CD4-positive, alpha-beta memory T cell (primary cell): ENCODE measurements at regions of chr16 and their contacts with region 1.

Region 1: DNA sequence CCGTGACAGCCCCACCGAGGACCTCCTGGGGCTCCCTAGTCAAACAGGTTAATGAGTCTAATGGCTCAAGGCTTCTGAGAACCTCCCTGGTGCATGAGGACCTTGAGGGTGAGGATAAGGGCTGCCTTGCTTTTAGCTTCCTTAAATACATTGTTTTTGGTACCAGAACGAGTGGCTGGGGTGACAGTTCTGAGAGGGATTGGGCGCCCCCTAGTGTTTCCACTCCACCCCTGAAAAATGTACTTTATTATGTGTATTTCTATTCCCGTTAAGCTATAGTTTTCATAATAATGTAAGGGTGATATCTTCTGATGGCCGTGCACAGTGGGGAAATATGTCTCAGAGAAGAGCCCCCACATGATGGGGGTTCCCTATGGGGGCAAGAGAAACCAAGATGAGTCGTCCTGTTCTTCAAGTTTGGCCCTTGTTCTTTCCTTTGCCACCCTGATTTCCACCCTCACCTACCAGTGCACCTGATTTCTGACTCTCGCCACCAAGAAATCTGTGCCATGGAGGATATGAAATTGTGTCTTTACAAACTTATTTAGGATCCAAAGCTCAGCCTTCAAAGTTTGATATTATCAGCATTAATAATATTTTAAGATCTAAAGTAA is 14.5 kb upstream of the VWA3A start:
- DNase-seq: peak; percentile 61 to 69 (median 67)
- H3K4me3 ChIP-seq: no peak overlapping the region
- H3K4me3 Mint-ChIP-seq: no peak overlapping the region
- H3K27ac ChIP-seq: no peak overlapping the region
- H3K27ac Mint-ChIP-seq: no peak overlapping the region
- H3K4me1 ChIP-seq: no peaks in the 10 kb centered on the region
- H3K4me1 Mint-ChIP-seq: peaks cover 0 to 5% (median 1%) of the 10 kb centered on the region in 4 donors
- H3K27me3 ChIP-seq: no peaks in the 10 kb centered on the region
- H3K27me3 Mint-ChIP-seq: no peaks in the 10 kb centered on the region

Region 2: GRCh38 chr16:21937336-21937829 is 140.4 kb before region 1 on chr16:
- CTCF ChIA-PET with region 1: no interaction called
- POLR2A ChIA-PET with region 1: no interaction called
- intact Hi-C with region 1: no loop called
- DNase-seq: no peak
- H3K4me3 ChIP-seq: no peak overlapping the region
- H3K4me3 Mint-ChIP-seq: no peak overlapping the region
- H3K27ac ChIP-seq: no peak overlapping the region
- H3K27ac Mint-ChIP-seq: peak overlapping the region in 2 of 7 donors; percentile 30 to 80
- H3K4me1 ChIP-seq: peaks cover 6% of the 10 kb centered on the region
- H3K4me1 Mint-ChIP-seq: peaks cover 9 to 15% (median 11%) of the 10 kb centered on the region in 4 donors
- H3K27me3 ChIP-seq: no peaks in the 10 kb centered on the region
- H3K27me3 Mint-ChIP-seq: peaks cover 0 to 2% of the 10 kb centered on the region in 2 donors

Region 3: DNA sequence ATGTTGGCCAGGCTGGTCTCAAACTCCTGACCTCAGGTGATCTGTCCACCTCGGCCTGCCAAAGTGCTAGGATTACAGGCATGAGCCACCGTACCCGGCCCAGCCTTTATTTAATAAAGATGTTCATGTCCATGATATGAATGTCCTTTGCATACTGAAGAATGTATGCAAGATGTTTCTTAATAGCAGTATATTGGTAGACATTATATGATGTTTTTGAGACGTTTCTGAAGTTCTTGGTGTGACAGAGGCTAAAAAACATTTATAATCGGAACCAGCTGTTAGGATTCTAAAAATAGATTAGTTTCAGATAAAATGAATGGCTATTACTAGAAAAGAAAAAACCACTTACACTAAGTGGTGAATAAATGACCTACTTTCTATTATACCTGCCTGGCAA is 88.7 kb before region 1 on chr16:
- CTCF ChIA-PET with region 1: interaction called, 25 read pairs
- POLR2A ChIA-PET with region 1: no interaction called
- intact Hi-C with region 1: no loop called
- DNase-seq: no peak
- H3K4me3 ChIP-seq: no peak overlapping the region
- H3K4me3 Mint-ChIP-seq: no peak overlapping the region
- H3K27ac ChIP-seq: no peak overlapping the region
- H3K27ac Mint-ChIP-seq: peak overlapping the region in 1 of 7 donors; percentile 62
- H3K4me1 ChIP-seq: peaks cover 24% of the 10 kb centered on the region
- H3K4me1 Mint-ChIP-seq: peaks cover 19 to 39% (median 27%) of the 10 kb centered on the region in 4 donors
- H3K27me3 ChIP-seq: no peaks in the 10 kb centered on the region
- H3K27me3 Mint-ChIP-seq: no peaks in the 10 kb centered on the region

Region 4: DNA sequence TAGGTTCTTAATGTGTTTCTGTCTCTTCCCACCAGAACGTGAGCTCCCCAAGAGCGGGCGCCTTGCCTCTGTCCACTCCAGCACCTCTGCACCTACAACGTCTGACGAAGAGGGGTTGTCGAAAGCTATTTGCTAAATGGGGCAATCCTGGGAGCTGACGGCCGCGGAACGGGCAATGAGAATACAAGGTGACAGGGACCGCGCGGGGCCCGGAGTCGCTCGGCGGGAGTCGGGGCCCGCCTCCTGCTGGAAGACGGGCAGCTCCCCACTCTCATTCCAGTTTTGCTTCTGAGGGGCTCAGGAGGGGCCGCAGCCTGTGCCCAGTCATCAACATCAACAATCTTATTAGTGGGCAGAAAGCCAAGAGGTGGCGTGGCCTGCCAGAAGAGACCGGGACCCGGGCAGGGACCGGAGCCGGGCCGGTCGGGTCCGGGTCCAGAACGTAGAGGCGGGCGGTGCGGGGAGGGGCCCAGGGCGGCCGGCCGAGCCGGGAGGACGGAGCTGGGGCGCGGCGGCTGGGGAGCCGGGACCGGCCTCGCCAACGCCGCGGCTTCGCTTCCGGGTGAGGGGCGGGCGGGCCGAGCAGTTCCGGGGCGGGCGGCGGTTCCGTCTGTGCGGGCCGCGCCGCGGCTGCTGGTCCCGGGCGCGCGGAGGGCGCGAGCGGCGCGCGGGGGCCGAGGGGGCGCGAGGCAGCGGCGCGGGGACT is 70.1 kb before region 1 on chr16 and contains the start of gene MOSMO:
- CTCF ChIA-PET with region 1: interaction called, 181 read pairs
- POLR2A ChIA-PET with region 1: interaction called, 14 read pairs
- intact Hi-C with region 1: no loop called
- DNase-seq: peak; percentile 65 to 73 (median 66)
- H3K4me3 ChIP-seq: peak within 1 kb of the TSS; percentile 12 to 74
- H3K4me3 Mint-ChIP-seq: peak within 1 kb of the TSS; percentile 86 to 93 (median 90)
- H3K27ac ChIP-seq: peak within 1 kb of the TSS; percentile 78
- H3K27ac Mint-ChIP-seq: peak within 1 kb of the TSS; percentile 61 to 97 (median 87)
- H3K4me1 ChIP-seq: peaks cover 41% of the 10 kb centered on the region
- H3K4me1 Mint-ChIP-seq: peaks cover 32 to 54% (median 40%) of the 10 kb centered on the region in 4 donors
- H3K27me3 ChIP-seq: no peaks in the 10 kb centered on the region
- H3K27me3 Mint-ChIP-seq: no peaks in the 10 kb centered on the region
- total RNA-seq, gene MOSMO: 21.9 to 23.4 TPM

Region 5: GRCh38 chr16:22065252-22065651 is 12.6 kb before region 1 on chr16:
- CTCF ChIA-PET with region 1: interaction called, 29 read pairs
- POLR2A ChIA-PET with region 1: no interaction called
- intact Hi-C with region 1: no loop called
- DNase-seq: no peak
- H3K4me3 ChIP-seq: no peak overlapping the region
- H3K4me3 Mint-ChIP-seq: no peak overlapping the region
- H3K27ac ChIP-seq: no peak overlapping the region
- H3K27ac Mint-ChIP-seq: no peak overlapping the region
- H3K4me1 ChIP-seq: peaks cover 3% of the 10 kb centered on the region
- H3K4me1 Mint-ChIP-seq: peaks cover 0 to 6% (median 1%) of the 10 kb centered on the region in 4 donors
- H3K27me3 ChIP-seq: no peaks in the 10 kb centered on the region
- H3K27me3 Mint-ChIP-seq: no peaks in the 10 kb centered on the region

Region 6: DNA sequence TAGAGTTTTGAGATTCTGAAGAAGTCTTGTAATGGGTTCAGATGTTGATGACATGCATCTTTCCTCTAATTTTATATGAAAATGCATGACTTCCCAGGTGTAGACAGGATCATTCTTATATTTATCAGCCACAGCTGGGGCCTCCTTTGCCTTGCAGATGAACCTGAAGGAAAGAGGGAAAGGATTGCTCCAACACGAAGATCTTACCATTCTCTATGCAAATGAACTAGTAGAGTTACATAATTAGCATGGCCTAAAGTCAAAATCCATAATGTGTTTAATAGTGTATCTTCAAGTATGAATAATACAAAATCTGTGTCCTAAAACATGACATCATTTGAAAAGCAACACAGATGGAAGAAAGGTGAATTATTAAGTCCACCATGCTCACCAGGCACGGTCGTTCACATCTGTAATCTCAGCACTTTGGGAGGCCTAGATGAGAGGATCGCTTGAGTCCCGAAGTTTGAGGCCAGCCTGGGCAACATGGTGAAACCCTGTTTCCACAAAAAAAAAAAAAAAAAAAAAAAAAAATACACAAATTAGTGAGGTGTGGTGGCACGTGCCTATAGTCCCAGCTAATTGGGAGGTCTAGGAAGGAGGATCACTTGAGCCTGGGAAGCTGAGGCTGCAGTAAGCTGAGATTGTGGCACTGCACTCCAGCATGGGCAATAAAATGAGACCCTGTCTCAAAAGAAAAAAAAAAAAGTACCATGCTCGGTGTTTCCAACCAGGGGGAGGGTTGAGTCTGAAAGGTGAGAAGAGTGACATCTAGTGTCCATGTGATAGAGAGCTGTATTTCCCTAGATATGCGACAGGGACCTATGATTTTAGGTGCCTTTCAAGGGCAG is 20.8 kb after region 1 on chr16:
- CTCF ChIA-PET with region 1: interaction called, 24 read pairs
- POLR2A ChIA-PET with region 1: no interaction called
- intact Hi-C with region 1: no loop called
- DNase-seq: peak in 4 of 5 donors; percentile 34 to 54 (median 40)
- H3K4me3 ChIP-seq: no peak overlapping the region
- H3K4me3 Mint-ChIP-seq: peak overlapping the region in 4 of 8 donors; percentile 21 to 70 (median 38)
- H3K27ac ChIP-seq: no peak overlapping the region
- H3K27ac Mint-ChIP-seq: no peak overlapping the region
- H3K4me1 ChIP-seq: no peaks in the 10 kb centered on the region
- H3K4me1 Mint-ChIP-seq: peaks cover 0 to 4% (median 0%) of the 10 kb centered on the region in 4 donors
- H3K27me3 ChIP-seq: no peaks in the 10 kb centered on the region
- H3K27me3 Mint-ChIP-seq: peaks cover 2 to 15% of the 10 kb centered on the region in 2 donors